ENCODE measurements at regions of chr1 and their contacts with region 1.

Region 1: GRCh38 chr1:116151739-116152576 is 40.8 kb downstream of the MAB21L3 start:
- DNase-seq: peak; percentile 59 to 81 (median 69)
- H3K4me3 ChIP-seq: peak overlapping the region; percentile 26 to 65 (median 31)
- H3K4me3 Mint-ChIP-seq: peak overlapping the region; percentile 62 to 75
- H3K27ac ChIP-seq: no peak overlapping the region
- H3K27ac Mint-ChIP-seq: peak overlapping the region in 2 of 7 donors; percentile 27 to 50
- H3K4me1 ChIP-seq: peaks cover 4 to 5% of the 10 kb centered on the region in 2 donors
- H3K4me1 Mint-ChIP-seq: peaks cover 5% of the 10 kb centered on the region
- H3K27me3 ChIP-seq: no peaks in the 10 kb centered on the region
- H3K27me3 Mint-ChIP-seq: peaks cover 8 to 9% (median 8%) of the 10 kb centered on the region in 3 donors
- CTCF ChIP-seq: peak; percentile 94

Region 2: DNA sequence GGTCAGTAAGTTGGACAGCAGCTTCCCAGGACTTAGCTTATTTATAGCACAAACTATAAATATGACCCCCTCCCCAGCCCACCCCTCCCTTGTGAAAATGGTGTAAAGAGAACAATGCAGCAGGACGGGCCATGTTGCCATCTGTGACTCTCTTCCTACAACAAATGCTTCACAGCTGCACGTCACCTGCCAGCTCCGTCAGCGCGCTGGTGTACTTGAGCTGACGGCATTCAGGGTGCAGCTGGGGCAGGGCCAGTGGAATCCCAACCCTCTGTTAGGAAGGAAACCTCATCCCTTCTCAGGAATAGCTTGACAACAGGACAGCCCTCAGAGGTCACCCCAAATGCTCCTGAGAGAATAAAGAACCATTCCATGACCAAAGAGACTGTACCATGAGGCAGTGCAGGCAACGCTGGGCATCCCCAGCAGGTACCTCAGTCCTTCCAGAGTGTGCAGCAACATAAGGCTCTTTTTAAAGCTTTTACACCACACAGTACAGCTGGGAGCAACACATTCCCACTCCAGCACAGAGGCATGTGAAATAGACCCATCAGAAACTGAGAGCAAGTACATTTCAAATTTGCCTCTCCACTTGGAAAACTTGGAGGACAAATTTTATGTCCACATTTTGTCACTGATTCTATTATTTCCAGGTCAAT is 306.1 kb after region 1 on chr1:
- intact Hi-C with region 1: no loop called
- DNase-seq: no peak
- H3K4me3 ChIP-seq: no peak overlapping the region
- H3K4me3 Mint-ChIP-seq: no peak overlapping the region
- H3K27ac ChIP-seq: no peak overlapping the region
- H3K27ac Mint-ChIP-seq: no peak overlapping the region
- H3K4me1 ChIP-seq: no peaks in the 10 kb centered on the region
- H3K4me1 Mint-ChIP-seq: no peaks in the 10 kb centered on the region
- H3K27me3 ChIP-seq: peaks cover 0 to 2% of the 10 kb centered on the region in 2 donors
- H3K27me3 Mint-ChIP-seq: peaks cover 5 to 7% (median 6%) of the 10 kb centered on the region in 3 donors
- CTCF ChIP-seq: no peak

Region 3: GRCh38 chr1:116485071-116485735 is 333.2 kb after region 1 on chr1:
- intact Hi-C with region 1: loop called (anchors 5 kb)
- DNase-seq: peak; percentile 74 to 79 (median 75)
- H3K4me3 ChIP-seq: no peak overlapping the region
- H3K4me3 Mint-ChIP-seq: no peak overlapping the region
- H3K27ac ChIP-seq: no peak overlapping the region
- H3K27ac Mint-ChIP-seq: peak overlapping the region in 1 of 7 donors; percentile 46
- H3K4me1 ChIP-seq: no peaks in the 10 kb centered on the region
- H3K4me1 Mint-ChIP-seq: peaks cover 9% of the 10 kb centered on the region
- H3K27me3 ChIP-seq: no peaks in the 10 kb centered on the region
- H3K27me3 Mint-ChIP-seq: peaks cover 0 to 5% (median 4%) of the 10 kb centered on the region in 3 donors
- CTCF ChIP-seq: peak; percentile 92

Measured in CD14-positive monocyte (primary cell).